Heart left ventricle (tissue), 16 donors: ENCODE measurements at regions of chr21 and their contacts with region 1.

Region 1: DNA sequence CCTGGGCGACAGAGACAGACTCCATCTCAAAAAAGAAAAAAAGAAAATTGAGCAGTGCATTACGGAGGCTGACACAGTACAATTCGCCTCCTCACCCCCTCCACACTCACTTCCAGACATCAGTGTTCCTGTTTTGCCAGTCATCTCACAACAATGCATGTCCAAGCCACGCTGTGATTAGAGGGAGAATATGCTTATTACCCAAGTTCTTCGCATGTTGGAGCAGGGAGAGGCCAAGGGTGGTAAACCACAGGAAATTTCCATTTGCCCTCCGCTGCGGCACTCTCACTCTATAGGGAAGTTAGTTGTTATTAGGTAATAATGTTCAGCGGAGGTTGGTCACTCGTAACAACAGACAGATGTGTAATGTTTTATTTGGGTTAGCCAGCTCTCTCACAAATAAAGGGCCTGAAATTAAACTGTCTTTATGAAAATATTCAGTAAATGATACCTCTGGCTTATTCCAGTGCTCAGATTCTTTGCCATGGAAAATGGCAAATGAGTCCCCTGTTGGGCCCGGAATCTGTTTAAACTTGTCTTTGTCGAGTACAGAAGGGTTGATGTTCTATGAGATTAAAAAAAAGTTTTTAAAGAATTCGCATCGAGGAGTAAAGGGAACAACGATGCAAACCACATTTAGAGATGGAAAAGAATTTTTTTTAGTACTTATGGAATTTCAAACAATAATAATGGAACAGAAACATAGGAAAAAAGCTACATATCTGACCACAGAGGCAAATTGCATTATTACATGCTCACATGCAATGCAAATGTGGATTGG is 33.1 kb downstream of the KCNJ15 start:
- DNase-seq: peak in 3 of 5 donors; percentile 33 to 37 (median 34)
- ATAC-seq: peak in 3 of 4 donors; percentile 65 to 91 (median 71)
- H3K4me3 ChIP-seq: no peak overlapping the region
- H3K27ac ChIP-seq: peak overlapping the region in 1 of 12 donors; percentile 80
- H3K4me1 ChIP-seq: peaks cover 0 to 23% (median 0%) of the 10 kb centered on the region in 12 donors
- H3K27me3 ChIP-seq: no peaks in the 10 kb centered on the region
- CTCF ChIP-seq: no peak
- POLR2A ChIP-seq: no peak

Region 2: DNA sequence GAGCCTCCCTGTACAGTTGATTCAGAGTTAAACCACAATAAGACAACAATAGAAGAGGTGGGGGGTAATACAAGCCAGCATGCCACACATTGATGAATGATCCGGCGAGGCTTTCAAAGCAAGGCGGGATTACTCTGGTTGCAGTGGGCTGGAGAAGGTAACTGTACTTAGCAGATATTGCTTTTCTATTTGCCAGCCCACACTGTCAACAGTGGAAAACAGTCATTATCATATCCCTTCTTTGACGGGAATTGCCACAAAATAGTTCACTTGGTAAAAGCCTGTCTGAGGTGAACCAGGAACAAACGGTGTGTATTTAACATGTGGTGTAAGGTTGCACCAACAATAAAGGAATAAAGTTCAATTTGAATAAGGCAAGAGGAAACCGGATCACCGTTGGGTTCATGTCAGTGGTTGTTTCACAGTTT is 38.9 kb before region 1 on chr21:
- intact Hi-C with region 1: loop called in 1 of 10 experiments (anchors 2 kb)
- DNase-seq: no peak
- ATAC-seq: no peak
- H3K4me3 ChIP-seq: no peak overlapping the region
- H3K27ac ChIP-seq: no peak overlapping the region
- H3K4me1 ChIP-seq: peaks cover 0 to 15% (median 0%) of the 10 kb centered on the region in 12 donors
- H3K27me3 ChIP-seq: no peaks in the 10 kb centered on the region
- CTCF ChIP-seq: no peak
- POLR2A ChIP-seq: no peak